ENCODE measurements at regions of chr14 and their contacts with region 1.

Region 1: DNA sequence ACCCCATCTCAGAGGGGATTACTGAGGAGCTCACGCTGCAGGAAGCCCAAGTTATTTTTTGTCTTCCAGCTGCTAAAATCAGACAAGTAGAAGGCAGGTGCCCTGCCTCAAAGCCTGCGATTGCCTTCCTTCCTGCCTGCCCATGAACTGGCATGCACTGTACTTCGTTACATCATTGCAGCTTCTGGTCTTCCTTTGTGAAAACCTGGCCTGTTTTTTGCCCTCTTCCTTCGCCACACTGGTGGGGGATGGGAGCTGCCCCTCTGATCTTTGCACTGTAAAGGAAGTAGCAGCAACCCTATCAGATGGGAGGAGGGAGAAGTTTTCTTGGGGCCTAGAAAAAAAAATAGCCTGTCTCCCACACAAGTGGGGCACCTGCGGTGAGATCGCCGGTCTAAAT is 1098.7 kb downstream of the BCL11B start:
- DNase-seq: peak; percentile 74 to 80 (median 77)
- H3K4me3 ChIP-seq: peak overlapping the region in 1 of 2 donors; percentile 33
- H3K4me3 Mint-ChIP-seq: peak overlapping the region; percentile 75 to 87 (median 81)
- H3K27ac ChIP-seq: peak overlapping the region; percentile 64
- H3K27ac Mint-ChIP-seq: peak overlapping the region; percentile 86 to 99 (median 94)
- H3K4me1 ChIP-seq: peaks cover 100% of the 10 kb centered on the region
- H3K4me1 Mint-ChIP-seq: peaks cover 87 to 100% (median 93%) of the 10 kb centered on the region in 4 donors
- H3K27me3 ChIP-seq: no peaks in the 10 kb centered on the region
- H3K27me3 Mint-ChIP-seq: no peaks in the 10 kb centered on the region

Region 2: DNA sequence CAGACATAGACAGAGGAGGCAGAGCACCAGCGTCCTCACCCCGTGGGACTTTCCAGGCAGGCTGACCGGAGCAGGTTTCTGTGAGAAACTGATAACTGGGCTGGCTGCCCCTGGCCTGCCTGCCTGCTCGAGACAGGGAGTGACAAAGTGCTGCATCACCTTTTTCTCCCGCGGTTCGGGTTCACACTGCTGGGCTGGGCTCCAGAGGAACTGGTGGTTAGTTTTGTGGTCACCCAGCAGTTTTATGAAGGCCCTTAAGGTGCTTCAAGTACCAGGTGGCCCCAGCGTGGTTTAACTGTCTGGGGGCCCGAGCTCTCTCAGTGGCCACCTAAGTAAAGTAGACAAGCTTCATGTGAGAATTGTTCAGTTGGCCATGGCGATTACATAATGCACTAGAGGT is 25.1 kb after region 1 on chr14:
- CTCF ChIA-PET with region 1: interaction called, 5 read pairs
- POLR2A ChIA-PET with region 1: interaction called, 475 read pairs
- intact Hi-C with region 1: no loop called
- DNase-seq: peak in 4 of 5 donors; percentile 46 to 68 (median 48)
- H3K4me3 ChIP-seq: peak overlapping the region in 1 of 2 donors; percentile 12
- H3K4me3 Mint-ChIP-seq: peak overlapping the region in 7 of 8 donors; percentile 45 to 81 (median 72)
- H3K27ac ChIP-seq: peak overlapping the region; percentile 12
- H3K27ac Mint-ChIP-seq: peak overlapping the region; percentile 78 to 88 (median 84)
- H3K4me1 ChIP-seq: peaks cover 81% of the 10 kb centered on the region
- H3K4me1 Mint-ChIP-seq: peaks cover 67 to 94% (median 75%) of the 10 kb centered on the region in 4 donors
- H3K27me3 ChIP-seq: no peaks in the 10 kb centered on the region
- H3K27me3 Mint-ChIP-seq: no peaks in the 10 kb centered on the region

Region 3: GRCh38 chr14:98382662-98383061 is 209.4 kb after region 1 on chr14:
- CTCF ChIA-PET with region 1: no interaction called
- POLR2A ChIA-PET with region 1: no interaction called
- intact Hi-C with region 1: no loop called
- DNase-seq: no peak
- H3K4me3 ChIP-seq: no peak overlapping the region
- H3K4me3 Mint-ChIP-seq: no peak overlapping the region
- H3K27ac ChIP-seq: no peak overlapping the region
- H3K27ac Mint-ChIP-seq: peak overlapping the region in 1 of 7 donors; percentile 42
- H3K4me1 ChIP-seq: no peaks in the 10 kb centered on the region
- H3K4me1 Mint-ChIP-seq: peaks cover 0 to 5% (median 1%) of the 10 kb centered on the region in 4 donors
- H3K27me3 ChIP-seq: no peaks in the 10 kb centered on the region
- H3K27me3 Mint-ChIP-seq: peaks cover 0 to 1% of the 10 kb centered on the region in 2 donors